CD4-positive, alpha-beta T cell (primary cell): ENCODE measurements at regions of chr13 and their contacts with region 1.

Region 1: GRCh38 chr13:27406178-27406939 is 18.1 kb upstream of the GTF3A start:
- DNase-seq: peak in 10 of 14 experiments; percentile 5 to 78 (median 23)
- ATAC-seq: peak; percentile 73
- H3K4me3 ChIP-seq: no peak overlapping the region
- H3K4me3 Mint-ChIP-seq: no peak overlapping the region
- H3K27ac ChIP-seq: no peak overlapping the region
- H3K27ac Mint-ChIP-seq: no peak overlapping the region
- H3K4me1 ChIP-seq: peaks cover 5% of the 10 kb centered on the region
- H3K4me1 Mint-ChIP-seq: no peaks in the 10 kb centered on the region
- H3K27me3 ChIP-seq: no peaks in the 10 kb centered on the region
- H3K27me3 Mint-ChIP-seq: peaks cover 17% of the 10 kb centered on the region
- CTCF ChIP-seq: peak; percentile 67

Region 2: DNA sequence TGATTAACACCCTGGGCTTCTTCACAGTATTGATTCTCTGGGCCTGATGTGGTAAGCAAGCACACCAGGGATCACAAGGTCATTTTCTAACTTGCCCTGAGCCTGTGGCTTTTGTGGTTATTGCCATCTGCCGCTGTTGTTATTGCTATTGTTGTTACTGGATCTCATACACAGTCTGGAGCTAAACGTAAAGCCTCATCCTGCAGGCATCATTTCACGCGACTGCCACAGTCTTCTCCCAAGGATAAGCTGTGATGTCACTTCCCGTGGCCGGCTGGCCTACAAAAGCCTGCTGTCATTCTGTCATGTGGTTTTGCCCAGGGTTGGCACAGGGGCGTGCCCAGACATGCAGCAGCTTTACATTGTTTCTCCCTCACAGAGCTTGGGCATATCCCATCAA is 491.7 kb before region 1 on chr13:
- CTCF ChIA-PET with region 1: no interaction called
- POLR2A ChIA-PET with region 1: no interaction called
- intact Hi-C with region 1: no loop called
- DNase-seq: peak in 2 of 14 experiments; percentile 2 to 4
- ATAC-seq: no peak
- H3K4me3 ChIP-seq: no peak overlapping the region
- H3K4me3 Mint-ChIP-seq: no peak overlapping the region
- H3K27ac ChIP-seq: no peak overlapping the region
- H3K27ac Mint-ChIP-seq: no peak overlapping the region
- H3K4me1 ChIP-seq: peaks cover 3% of the 10 kb centered on the region
- H3K4me1 Mint-ChIP-seq: no peaks in the 10 kb centered on the region
- H3K27me3 ChIP-seq: peaks cover 3 to 5% of the 10 kb centered on the region in 2 experiments
- H3K27me3 Mint-ChIP-seq: peaks cover 13% of the 10 kb centered on the region
- CTCF ChIP-seq: no peak

Region 3: DNA sequence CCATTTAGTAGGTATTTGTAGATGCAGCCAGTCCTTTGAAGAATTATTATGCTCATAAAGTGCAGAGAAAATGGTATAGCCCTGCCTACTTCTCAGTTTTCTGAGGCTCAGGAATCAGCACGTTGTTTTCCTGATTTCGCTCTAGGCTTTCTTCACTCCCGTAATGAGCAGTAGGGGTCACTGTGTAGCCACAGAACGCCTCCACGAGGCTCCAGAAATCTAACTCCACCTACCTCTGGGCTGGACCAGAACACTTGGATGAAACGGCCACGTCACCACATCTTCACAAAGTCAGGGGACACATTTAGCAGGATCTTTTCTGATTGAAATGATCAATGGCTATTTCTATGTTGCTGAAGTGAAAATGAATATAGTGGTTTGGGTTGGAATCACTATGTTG is 31.7 kb before region 1 on chr13:
- CTCF ChIA-PET with region 1: no interaction called
- POLR2A ChIA-PET with region 1: no interaction called
- intact Hi-C with region 1: loop called in 1 of 2 experiments (anchors 2 kb)
- DNase-seq: peak; percentile 19 to 80 (median 38)
- ATAC-seq: peak; percentile 82
- H3K4me3 ChIP-seq: no peak overlapping the region
- H3K4me3 Mint-ChIP-seq: no peak overlapping the region
- H3K27ac ChIP-seq: no peak overlapping the region
- H3K27ac Mint-ChIP-seq: no peak overlapping the region
- H3K4me1 ChIP-seq: peaks cover 3% of the 10 kb centered on the region
- H3K4me1 Mint-ChIP-seq: peaks cover 5% of the 10 kb centered on the region
- H3K27me3 ChIP-seq: peaks cover 5 to 7% of the 10 kb centered on the region in 2 experiments
- H3K27me3 Mint-ChIP-seq: peaks cover 34% of the 10 kb centered on the region
- CTCF ChIP-seq: peak; percentile 75

Region 4: GRCh38 chr13:27449936-27450828 is 43.8 kb after region 1 on chr13 and contains the start of gene MTIF3:
- CTCF ChIA-PET with region 1: no interaction called
- POLR2A ChIA-PET with region 1: no interaction called
- intact Hi-C with region 1: loop called in 1 of 2 experiments (anchors 1 kb)
- DNase-seq: peak; percentile 95 to 99 (median 97)
- ATAC-seq: peak; percentile 79
- H3K4me3 ChIP-seq: peak within 1 kb of the TSS; percentile 83
- H3K4me3 Mint-ChIP-seq: peak within 1 kb of the TSS; percentile 98
- H3K27ac ChIP-seq: peak within 1 kb of the TSS; percentile 95 to 97
- H3K27ac Mint-ChIP-seq: peak within 1 kb of the TSS; percentile 97
- H3K4me1 ChIP-seq: peaks cover 58% of the 10 kb centered on the region
- H3K4me1 Mint-ChIP-seq: peaks cover 74% of the 10 kb centered on the region
- H3K27me3 ChIP-seq: no peaks in the 10 kb centered on the region
- H3K27me3 Mint-ChIP-seq: no peaks in the 10 kb centered on the region
- CTCF ChIP-seq: peak; percentile 31
- total RNA-seq, gene MTIF3: 13.6 to 14.5 TPM

Region 5: DNA sequence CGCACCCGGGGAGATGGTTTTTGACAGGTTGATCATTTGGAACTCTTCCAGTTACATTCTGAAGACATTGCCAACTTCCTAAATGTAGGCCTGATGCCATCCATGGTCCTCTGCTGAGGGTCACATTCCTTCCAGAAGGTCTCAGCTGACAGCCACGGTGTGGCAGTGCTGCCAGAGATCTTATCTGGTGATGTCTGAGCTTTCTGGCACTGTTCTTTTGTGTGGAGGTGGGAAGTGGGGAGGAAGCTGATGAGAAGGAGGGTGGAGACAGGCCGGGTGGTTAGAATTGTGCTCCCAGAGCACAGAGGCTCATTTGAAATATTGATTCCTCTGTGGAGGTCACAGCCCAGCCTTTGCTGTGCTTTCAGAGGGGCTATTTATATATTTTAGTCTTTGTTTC is 60.1 kb after region 1 on chr13:
- CTCF ChIA-PET with region 1: no interaction called
- POLR2A ChIA-PET with region 1: no interaction called
- intact Hi-C with region 1: no loop called
- DNase-seq: no peak
- ATAC-seq: no peak
- H3K4me3 ChIP-seq: no peak overlapping the region
- H3K4me3 Mint-ChIP-seq: no peak overlapping the region
- H3K27ac ChIP-seq: no peak overlapping the region
- H3K27ac Mint-ChIP-seq: no peak overlapping the region
- H3K4me1 ChIP-seq: peaks cover 7% of the 10 kb centered on the region
- H3K4me1 Mint-ChIP-seq: peaks cover 8% of the 10 kb centered on the region
- H3K27me3 ChIP-seq: no peaks in the 10 kb centered on the region
- H3K27me3 Mint-ChIP-seq: no peaks in the 10 kb centered on the region
- CTCF ChIP-seq: no peak

Region 6: GRCh38 chr13:27533155-27533643 is 126.8 kb after region 1 on chr13:
- CTCF ChIA-PET with region 1: no interaction called
- POLR2A ChIA-PET with region 1: no interaction called
- intact Hi-C with region 1: loop called in 1 of 2 experiments (anchors 5 kb)
- DNase-seq: peak in 13 of 14 experiments; percentile 18 to 68 (median 32)
- ATAC-seq: peak; percentile 39
- H3K4me3 ChIP-seq: peak overlapping the region; percentile 24
- H3K4me3 Mint-ChIP-seq: no peak overlapping the region
- H3K27ac ChIP-seq: no peak overlapping the region
- H3K27ac Mint-ChIP-seq: no peak overlapping the region
- H3K4me1 ChIP-seq: peaks cover 8% of the 10 kb centered on the region
- H3K4me1 Mint-ChIP-seq: peaks cover 10% of the 10 kb centered on the region
- H3K27me3 ChIP-seq: no peaks in the 10 kb centered on the region
- H3K27me3 Mint-ChIP-seq: peaks cover 6% of the 10 kb centered on the region
- CTCF ChIP-seq: peak; percentile 68

Region 7: DNA sequence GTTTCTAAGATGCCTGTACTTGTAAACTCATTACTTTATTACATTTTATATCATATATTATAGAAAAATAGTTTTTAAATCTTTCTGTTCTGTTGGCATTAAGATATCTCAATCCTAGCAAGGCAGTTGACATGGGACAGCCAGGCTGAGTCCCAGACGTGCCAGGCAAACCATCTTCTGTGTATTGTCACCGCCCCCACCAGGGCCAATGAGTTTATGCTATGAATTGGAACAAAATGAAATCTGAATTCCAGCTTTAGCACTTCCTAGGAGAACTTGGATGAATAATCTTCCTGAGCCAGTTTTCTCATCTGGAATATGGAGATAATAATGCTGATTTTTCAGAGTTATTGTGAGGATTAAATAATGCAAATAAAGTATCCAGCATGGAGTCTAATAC is 306.1 kb after region 1 on chr13:
- CTCF ChIA-PET with region 1: no interaction called
- POLR2A ChIA-PET with region 1: no interaction called
- intact Hi-C with region 1: loop called (anchors 5 to 10 kb)
- DNase-seq: peak in 10 of 14 experiments; percentile 8 to 54 (median 26)
- ATAC-seq: no peak
- H3K4me3 ChIP-seq: no peak overlapping the region
- H3K4me3 Mint-ChIP-seq: no peak overlapping the region
- H3K27ac ChIP-seq: no peak overlapping the region
- H3K27ac Mint-ChIP-seq: no peak overlapping the region
- H3K4me1 ChIP-seq: no peaks in the 10 kb centered on the region
- H3K4me1 Mint-ChIP-seq: no peaks in the 10 kb centered on the region
- H3K27me3 ChIP-seq: peaks cover 0 to 5% of the 10 kb centered on the region in 2 experiments
- H3K27me3 Mint-ChIP-seq: peaks cover 21% of the 10 kb centered on the region
- CTCF ChIP-seq: peak; percentile 61

Region 8: DNA sequence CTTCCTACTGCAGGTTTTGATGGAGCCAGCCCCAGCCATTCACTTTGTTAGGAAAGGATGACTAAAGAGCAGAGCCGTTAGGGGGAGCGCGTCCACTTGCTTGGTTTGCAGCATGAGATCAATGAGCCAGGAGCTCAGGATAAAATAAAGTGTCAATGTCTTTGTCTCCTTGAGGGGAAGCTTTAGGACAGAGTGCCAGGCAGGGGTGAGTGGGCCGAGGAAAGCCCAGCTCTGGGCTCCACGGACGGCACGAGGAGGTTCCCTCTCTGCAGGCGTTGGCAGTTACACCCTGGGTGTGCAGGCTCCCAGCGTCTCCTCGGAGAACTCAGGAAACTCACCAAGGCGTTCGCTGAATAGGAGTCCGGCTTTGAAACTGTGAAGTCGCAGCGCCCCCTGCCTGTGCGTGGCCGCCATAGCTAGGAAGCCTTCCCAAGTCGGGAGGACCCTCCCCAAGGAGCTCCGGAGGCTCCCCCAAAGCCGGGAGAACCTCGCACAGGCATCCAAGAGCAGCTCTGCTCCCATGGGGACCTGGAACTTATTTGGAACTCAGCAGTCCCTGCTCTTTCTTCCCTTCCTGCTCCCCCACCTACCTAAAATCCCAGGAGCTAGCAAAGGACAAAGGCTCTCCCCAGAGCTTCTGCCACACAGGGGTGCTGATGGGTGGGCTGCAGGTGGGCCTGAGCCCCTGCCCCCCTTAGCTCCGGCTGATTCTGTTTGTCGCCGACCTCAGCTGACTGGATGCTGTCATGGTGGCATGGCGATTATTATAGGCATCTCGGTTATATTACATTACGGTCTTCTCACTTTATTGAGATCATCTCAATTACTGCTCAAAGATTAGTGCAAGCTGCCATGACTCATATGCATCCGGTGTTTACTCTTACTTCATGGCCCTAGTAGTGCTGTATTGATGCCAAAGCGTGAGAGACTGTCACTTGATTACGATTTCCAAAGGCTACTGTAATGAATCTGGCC is 420.3 kb after region 1 on chr13:
- CTCF ChIA-PET with region 1: interaction called, 4 read pairs
- POLR2A ChIA-PET with region 1: interaction called, 4 read pairs
- intact Hi-C with region 1: loop called (anchors 1 kb)
- DNase-seq: peak; percentile 48 to 81 (median 59)
- ATAC-seq: peak; percentile 69
- H3K4me3 ChIP-seq: no peak overlapping the region
- H3K4me3 Mint-ChIP-seq: no peak overlapping the region
- H3K27ac ChIP-seq: no peak overlapping the region
- H3K27ac Mint-ChIP-seq: no peak overlapping the region
- H3K4me1 ChIP-seq: peaks cover 13% of the 10 kb centered on the region
- H3K4me1 Mint-ChIP-seq: peaks cover 6% of the 10 kb centered on the region
- H3K27me3 ChIP-seq: peaks cover 52 to 68% of the 10 kb centered on the region in 2 experiments
- H3K27me3 Mint-ChIP-seq: peaks cover 91% of the 10 kb centered on the region
- CTCF ChIP-seq: peak; percentile 93